Activated B cell treated with CpG ODN at 0.5 μM for 24 hours (primary cell): ENCODE measurements at regions of chr11 and their contacts with region 1.

Region 1: GRCh38 chr11:69055598-69056516 is 7.1 kb downstream of the TPCN2 start:
- DNase-seq: peak; percentile 78
- ATAC-seq: peak; percentile 87
- H3K4me3 Mint-ChIP-seq: peak overlapping the region; percentile 69
- H3K27ac Mint-ChIP-seq: peak overlapping the region; percentile 86
- H3K4me1 Mint-ChIP-seq: peaks cover 58% of the 10 kb centered on the region
- H3K27me3 Mint-ChIP-seq: no peaks in the 10 kb centered on the region
- CTCF ChIP-seq: no peak

Region 2: DNA sequence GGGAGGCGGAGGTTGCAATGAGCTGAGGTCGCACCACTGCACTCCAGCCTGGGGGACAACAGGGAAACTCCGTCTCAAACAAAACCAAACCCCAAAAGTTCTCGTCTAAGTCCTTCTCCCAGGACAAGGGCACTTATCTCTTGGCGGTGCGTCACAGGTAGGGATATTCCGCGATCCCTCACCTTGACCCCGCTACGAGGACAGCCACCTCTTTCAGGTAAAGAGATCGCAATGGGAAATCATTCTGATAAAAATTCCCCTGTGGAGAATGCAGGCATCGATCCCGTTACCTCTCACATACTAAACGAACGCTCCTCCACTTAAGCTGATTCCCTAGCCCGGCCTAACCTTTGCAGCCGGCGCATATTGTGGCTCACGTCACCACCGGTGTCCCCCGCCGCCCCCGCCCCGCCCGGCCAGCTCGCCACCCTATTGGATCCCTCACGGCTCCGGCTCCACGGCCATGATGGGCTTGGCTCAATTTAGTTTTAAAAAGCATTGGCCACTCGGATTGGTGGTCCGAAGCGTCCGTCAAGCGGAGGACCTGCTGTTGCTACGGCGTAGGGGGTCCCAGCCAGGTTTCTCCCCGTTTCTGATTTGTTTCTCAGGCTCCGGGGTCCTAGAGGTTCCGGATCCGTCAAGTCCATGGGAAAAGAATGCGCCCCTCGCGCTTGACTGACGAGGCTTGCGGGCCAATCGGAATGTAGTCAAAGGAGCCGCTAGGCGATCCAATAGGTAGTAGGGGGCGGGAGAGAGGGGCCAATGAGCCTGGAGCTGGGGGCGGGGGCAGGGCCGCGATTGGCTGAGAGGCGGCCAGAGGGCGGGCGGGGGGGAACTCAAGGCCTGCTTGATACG is 595.7 kb before region 1 on chr11:
- CTCF ChIA-PET with region 1: no interaction called
- POLR2A ChIA-PET with region 1: no interaction called
- intact Hi-C with region 1: loop called (anchors 10 kb)
- DNase-seq: peak; percentile 81
- ATAC-seq: peak; percentile 92
- H3K4me3 Mint-ChIP-seq: peak overlapping the region; percentile 94
- H3K27ac Mint-ChIP-seq: peak overlapping the region; percentile 97
- H3K4me1 Mint-ChIP-seq: peaks cover 39% of the 10 kb centered on the region
- H3K27me3 Mint-ChIP-seq: no peaks in the 10 kb centered on the region
- CTCF ChIP-seq: no peak

Region 3: DNA sequence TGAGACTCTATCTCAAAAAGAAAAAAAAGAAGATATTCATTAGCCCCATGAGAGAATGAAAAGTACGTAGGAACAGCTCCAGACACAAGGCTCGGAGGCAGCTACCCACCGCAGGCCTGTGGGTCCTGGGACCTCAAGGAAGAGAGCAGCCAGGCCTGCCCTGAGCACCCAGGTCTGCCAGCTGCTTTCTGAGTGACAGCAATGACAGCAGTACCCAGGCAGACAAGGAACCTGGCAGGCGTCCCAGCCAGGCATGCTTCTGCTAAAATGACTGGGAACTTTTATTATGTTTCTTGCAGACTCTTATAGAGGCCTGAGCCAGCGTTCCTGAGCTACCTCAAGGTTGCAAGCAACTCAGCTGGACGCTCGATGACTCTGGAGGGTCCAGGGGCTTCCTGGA is 245.7 kb before region 1 on chr11:
- CTCF ChIA-PET with region 1: no interaction called
- POLR2A ChIA-PET with region 1: interaction called, 8 read pairs
- intact Hi-C with region 1: loop called (anchors 5 kb)
- DNase-seq: no peak
- ATAC-seq: no peak
- H3K4me3 Mint-ChIP-seq: no peak overlapping the region
- H3K27ac Mint-ChIP-seq: no peak overlapping the region
- H3K4me1 Mint-ChIP-seq: peaks cover 31% of the 10 kb centered on the region
- H3K27me3 Mint-ChIP-seq: no peaks in the 10 kb centered on the region
- CTCF ChIP-seq: no peak

Region 4: DNA sequence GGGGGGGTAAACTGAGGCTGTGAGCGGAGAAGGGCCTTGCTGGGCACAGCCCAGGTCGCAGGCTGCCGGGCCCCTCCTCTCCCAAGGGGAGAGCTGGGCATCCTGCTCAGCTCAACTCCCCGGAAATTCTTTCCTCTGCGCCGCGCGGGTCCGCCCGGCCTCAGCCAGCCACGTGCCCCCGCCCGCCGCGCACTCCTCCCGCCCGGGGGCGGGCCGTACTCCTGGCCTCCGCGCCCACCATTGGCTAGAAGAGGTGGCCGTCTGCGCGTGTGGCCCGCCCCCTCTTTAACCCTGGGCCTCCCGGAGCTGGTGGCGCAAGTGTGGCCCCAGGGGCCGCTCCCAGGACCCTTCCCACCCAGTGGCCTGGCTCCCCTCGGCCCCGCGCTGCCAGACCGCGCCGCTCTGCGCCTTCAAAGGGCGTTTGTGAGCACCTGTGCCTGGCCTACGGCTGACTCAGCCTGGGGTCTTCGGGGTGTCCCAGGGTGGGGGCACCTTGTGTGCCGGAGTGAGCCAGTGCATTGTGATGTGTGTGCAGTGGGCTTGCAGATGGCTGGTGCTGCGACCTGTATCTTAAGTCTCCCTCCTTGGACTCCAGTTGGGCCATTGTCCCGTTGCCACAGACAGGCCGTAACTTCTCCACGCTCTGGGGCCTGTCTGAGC is 44.8 kb before region 1 on chr11:
- CTCF ChIA-PET with region 1: no interaction called
- POLR2A ChIA-PET with region 1: interaction called, 10 read pairs
- intact Hi-C with region 1: no loop called
- DNase-seq: no peak
- ATAC-seq: peak; percentile 89
- H3K4me3 Mint-ChIP-seq: no peak overlapping the region
- H3K27ac Mint-ChIP-seq: no peak overlapping the region
- H3K4me1 Mint-ChIP-seq: peaks cover 5% of the 10 kb centered on the region
- H3K27me3 Mint-ChIP-seq: peaks cover 28% of the 10 kb centered on the region
- CTCF ChIP-seq: no peak

Region 5: GRCh38 chr11:69080257-69080995 is 24.6 kb after region 1 on chr11:
- CTCF ChIA-PET with region 1: no interaction called
- POLR2A ChIA-PET with region 1: no interaction called
- intact Hi-C with region 1: loop called (anchors 1 kb)
- DNase-seq: no peak
- ATAC-seq: no peak
- H3K4me3 Mint-ChIP-seq: no peak overlapping the region
- H3K27ac Mint-ChIP-seq: no peak overlapping the region
- H3K4me1 Mint-ChIP-seq: peaks cover 12% of the 10 kb centered on the region
- H3K27me3 Mint-ChIP-seq: no peaks in the 10 kb centered on the region
- CTCF ChIP-seq: no peak